CD4-positive, alpha-beta T cell (primary cell): ENCODE measurements at regions of chr1 and their contacts with region 1.

Region 1: GRCh38 chr1:161382214-161383019 is 14.7 kb upstream of the CFAP126 start:
- DNase-seq: peak in 3 of 14 experiments; percentile 69 to 72 (median 70)
- ATAC-seq: peak; percentile 83
- H3K4me3 ChIP-seq: no peak overlapping the region
- H3K4me3 Mint-ChIP-seq: no peak overlapping the region
- H3K27ac ChIP-seq: no peak overlapping the region
- H3K27ac Mint-ChIP-seq: no peak overlapping the region
- H3K4me1 ChIP-seq: peaks cover 6% of the 10 kb centered on the region
- H3K4me1 Mint-ChIP-seq: peaks cover 11% of the 10 kb centered on the region
- H3K27me3 ChIP-seq: no peaks in the 10 kb centered on the region
- H3K27me3 Mint-ChIP-seq: no peaks in the 10 kb centered on the region
- CTCF ChIP-seq: peak; percentile 79

Region 2: GRCh38 chr1:161192476-161193465 is 189.6 kb before region 1 on chr1:
- CTCF ChIA-PET with region 1: no interaction called
- POLR2A ChIA-PET with region 1: no interaction called
- intact Hi-C with region 1: loop called in 1 of 2 experiments (anchors 5 kb)
- DNase-seq: peak; percentile 49 to 87 (median 66)
- ATAC-seq: peak; percentile 98
- H3K4me3 ChIP-seq: no peak overlapping the region
- H3K4me3 Mint-ChIP-seq: peak overlapping the region; percentile 1
- H3K27ac ChIP-seq: no peak overlapping the region
- H3K27ac Mint-ChIP-seq: peak overlapping the region; percentile 14
- H3K4me1 ChIP-seq: peaks cover 72% of the 10 kb centered on the region
- H3K4me1 Mint-ChIP-seq: peaks cover 44% of the 10 kb centered on the region
- H3K27me3 ChIP-seq: no peaks in the 10 kb centered on the region
- H3K27me3 Mint-ChIP-seq: no peaks in the 10 kb centered on the region
- CTCF ChIP-seq: peak; percentile 80

Region 3: GRCh38 chr1:161209790-161210409 is 172.5 kb before region 1 on chr1:
- CTCF ChIA-PET with region 1: no interaction called
- POLR2A ChIA-PET with region 1: no interaction called
- intact Hi-C with region 1: loop called (anchors 1 to 5 kb)
- DNase-seq: peak; percentile 55 to 87 (median 66)
- ATAC-seq: peak; percentile 98
- H3K4me3 ChIP-seq: no peak overlapping the region
- H3K4me3 Mint-ChIP-seq: no peak overlapping the region
- H3K27ac ChIP-seq: no peak overlapping the region
- H3K27ac Mint-ChIP-seq: peak overlapping the region; percentile 12
- H3K4me1 ChIP-seq: peaks cover 22% of the 10 kb centered on the region
- H3K4me1 Mint-ChIP-seq: peaks cover 39% of the 10 kb centered on the region
- H3K27me3 ChIP-seq: no peaks in the 10 kb centered on the region
- H3K27me3 Mint-ChIP-seq: no peaks in the 10 kb centered on the region
- CTCF ChIP-seq: peak; percentile 84

Region 4: DNA sequence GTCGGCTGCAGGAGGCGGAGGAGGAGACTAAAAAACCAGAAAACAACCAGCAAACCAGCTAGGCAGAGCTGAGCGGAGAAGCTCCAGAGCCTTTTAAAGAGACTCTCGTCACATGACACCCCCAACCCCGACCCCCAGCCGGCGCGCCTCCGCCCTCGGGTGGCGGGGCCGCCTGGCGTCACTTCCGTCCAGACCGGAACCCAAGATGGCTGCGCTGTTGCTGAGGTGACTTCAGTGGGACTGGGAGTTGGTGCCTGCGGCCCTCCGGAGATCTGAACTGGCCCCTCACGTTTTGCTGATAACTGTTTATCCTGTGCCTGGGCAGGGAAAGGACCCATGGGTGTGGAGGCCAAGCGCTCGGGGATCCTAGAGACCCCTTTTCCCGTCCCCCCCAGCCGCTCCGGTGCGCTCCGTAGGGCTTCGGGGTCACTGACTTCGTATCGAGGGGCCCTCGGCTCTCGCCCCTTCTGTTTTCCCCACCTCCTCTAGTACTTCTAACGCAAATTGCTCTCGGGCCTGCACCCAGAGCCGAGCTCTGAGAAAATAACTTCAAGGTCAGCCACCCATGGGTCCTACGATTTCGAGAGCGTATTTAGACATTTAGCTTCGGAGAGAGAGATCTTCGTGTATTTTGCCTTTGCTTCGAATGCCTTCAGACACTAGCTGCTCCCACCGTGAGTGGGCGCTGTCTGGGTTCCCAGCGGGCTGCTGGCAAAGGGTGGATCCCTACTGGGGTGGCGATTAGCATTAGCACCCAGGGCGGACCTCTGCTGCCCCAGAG is 68.0 kb before region 1 on chr1 and contains the start of gene SDHC:
- CTCF ChIA-PET with region 1: no interaction called
- POLR2A ChIA-PET with region 1: interaction called, 5 read pairs
- intact Hi-C with region 1: loop called (anchors 1 to 5 kb)
- DNase-seq: peak; percentile 84 to 96 (median 90)
- ATAC-seq: peak; percentile 98
- H3K4me3 ChIP-seq: peak within 1 kb of the TSS; percentile 90
- H3K4me3 Mint-ChIP-seq: peak within 1 kb of the TSS; percentile 98
- H3K27ac ChIP-seq: peak within 1 kb of the TSS; percentile 94 to 97
- H3K27ac Mint-ChIP-seq: peak within 1 kb of the TSS; percentile 100
- H3K4me1 ChIP-seq: peaks cover 18% of the 10 kb centered on the region
- H3K4me1 Mint-ChIP-seq: peaks cover 30% of the 10 kb centered on the region
- H3K27me3 ChIP-seq: no peaks in the 10 kb centered on the region
- H3K27me3 Mint-ChIP-seq: no peaks in the 10 kb centered on the region
- CTCF ChIP-seq: no peak
- total RNA-seq, gene SDHC: 33.0 to 37.2 TPM